Ovary (tissue), 10 donors: ENCODE measurements at regions of chr11 and their contacts with region 1.

Region 1: GRCh38 chr11:77503015-77503414 is 29.1 kb upstream of the PAK1 start:
- DNase-seq: no peak
- H3K4me3 ChIP-seq: no peak overlapping the region
- H3K27ac ChIP-seq: no peak overlapping the region
- H3K4me1 ChIP-seq: peaks cover 6% of the 10 kb centered on the region
- H3K27me3 ChIP-seq: no peaks in the 10 kb centered on the region
- CTCF ChIP-seq: no peak
- EP300 ChIP-seq: no peak
- POLR2A ChIP-seq: no peak

Region 2: DNA sequence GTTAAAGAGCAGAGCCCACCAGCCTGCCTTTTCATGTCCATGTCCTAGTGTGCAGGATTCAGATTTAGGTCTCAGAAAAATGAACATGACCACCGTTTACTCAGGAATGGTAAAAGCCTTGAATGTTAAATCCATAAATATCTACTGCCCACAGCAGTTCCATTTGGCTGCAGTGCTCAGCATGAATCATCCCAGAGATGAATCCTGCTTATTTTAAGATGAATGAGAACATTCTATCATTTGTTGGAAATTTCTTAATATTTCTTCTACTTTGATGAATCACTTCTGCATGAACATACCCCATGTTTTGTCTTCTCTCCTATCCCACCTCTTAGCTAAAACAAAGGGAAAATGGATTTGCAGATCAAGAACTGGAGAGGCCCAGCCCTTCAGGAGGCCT is 39.3 kb after region 1 on chr11:
- intact Hi-C with region 1: loop called in 1 of 4 experiments (anchors 5 kb)
- DNase-seq: no peak
- H3K4me3 ChIP-seq: no peak overlapping the region
- H3K27ac ChIP-seq: no peak overlapping the region
- H3K4me1 ChIP-seq: no peaks in the 10 kb centered on the region
- H3K27me3 ChIP-seq: no peaks in the 10 kb centered on the region
- CTCF ChIP-seq: no peak
- EP300 ChIP-seq: no peak
- POLR2A ChIP-seq: no peak